IMR-90 (cell line): ENCODE measurements at regions of chr5 and their contacts with region 1.

Region 1: DNA sequence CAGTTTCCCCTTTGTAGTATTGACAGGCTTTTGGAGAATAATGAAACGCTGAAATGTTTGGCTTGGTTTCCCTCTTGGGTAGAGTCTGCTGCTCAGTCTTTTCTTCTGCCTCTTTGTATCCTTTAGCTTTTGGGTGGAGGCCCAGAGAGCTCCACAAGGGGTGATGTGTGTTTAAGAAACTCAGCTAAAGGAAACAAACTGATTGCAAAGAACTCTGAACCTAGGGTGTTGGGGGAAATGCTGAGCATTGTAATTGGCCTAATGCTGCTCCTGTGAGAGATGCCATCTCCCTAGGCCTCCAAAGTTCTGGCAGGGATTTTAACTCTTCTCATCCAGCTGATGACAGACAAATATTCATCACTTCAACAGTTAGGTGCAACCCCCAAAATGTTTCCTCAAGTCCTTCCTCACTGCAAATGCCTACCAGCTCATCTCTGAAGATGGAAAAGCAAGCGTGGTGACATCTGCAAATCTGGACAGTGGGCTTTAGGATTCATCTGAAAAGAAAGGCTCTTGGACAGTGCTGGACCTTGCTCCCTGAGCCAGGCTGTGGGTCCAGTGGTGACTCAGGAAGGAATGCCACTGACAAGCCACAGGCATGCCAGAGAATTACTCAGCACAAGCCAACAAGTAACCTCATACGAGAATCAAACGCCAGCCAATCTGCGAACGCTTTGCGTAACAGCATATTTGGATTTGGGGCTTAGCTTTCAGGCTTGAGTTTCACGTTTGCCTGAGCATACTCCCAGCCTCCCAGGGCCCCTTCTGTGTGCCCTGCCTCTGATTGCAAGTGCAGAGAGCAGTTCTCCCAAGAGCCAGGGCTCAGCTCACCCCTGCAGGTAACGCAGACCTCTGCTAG is 30.5 kb upstream of the ZSWIM6 start:
- DNase-seq: peak; percentile 100
- ATAC-seq: peak; percentile 88
- H3K4me3 ChIP-seq: no peak overlapping the region; the same call in 1 of the 2 replicates
- H3K27ac ChIP-seq: peak overlapping the region; percentile 93
- H3K4me1 ChIP-seq: peaks cover 37% of the 10 kb centered on the region
- H3K27me3 ChIP-seq: no peaks in the 10 kb centered on the region
- CTCF ChIP-seq: peak; percentile 21; the same call in 1 of the 2 replicates
- POLR2A ChIP-seq: peak; percentile 86
- RAD21 ChIP-seq: peak; percentile 32

Region 2: GRCh38 chr5:61115968-61116367 is 185.6 kb before region 1 on chr5:
- CTCF ChIA-PET with region 1: no interaction called
- POLR2A ChIA-PET with region 1: no interaction called
- dilution Hi-C with region 1: no loop called
- in situ Hi-C with region 1: no loop called
- intact Hi-C with region 1: no loop called
- DNase-seq: no peak
- ATAC-seq: no peak
- H3K4me3 ChIP-seq: no peak overlapping the region
- H3K27ac ChIP-seq: no peak overlapping the region
- H3K4me1 ChIP-seq: no peaks in the 10 kb centered on the region
- H3K27me3 ChIP-seq: no peaks in the 10 kb centered on the region
- CTCF ChIP-seq: no peak
- POLR2A ChIP-seq: no peak
- RAD21 ChIP-seq: no peak

Region 3: DNA sequence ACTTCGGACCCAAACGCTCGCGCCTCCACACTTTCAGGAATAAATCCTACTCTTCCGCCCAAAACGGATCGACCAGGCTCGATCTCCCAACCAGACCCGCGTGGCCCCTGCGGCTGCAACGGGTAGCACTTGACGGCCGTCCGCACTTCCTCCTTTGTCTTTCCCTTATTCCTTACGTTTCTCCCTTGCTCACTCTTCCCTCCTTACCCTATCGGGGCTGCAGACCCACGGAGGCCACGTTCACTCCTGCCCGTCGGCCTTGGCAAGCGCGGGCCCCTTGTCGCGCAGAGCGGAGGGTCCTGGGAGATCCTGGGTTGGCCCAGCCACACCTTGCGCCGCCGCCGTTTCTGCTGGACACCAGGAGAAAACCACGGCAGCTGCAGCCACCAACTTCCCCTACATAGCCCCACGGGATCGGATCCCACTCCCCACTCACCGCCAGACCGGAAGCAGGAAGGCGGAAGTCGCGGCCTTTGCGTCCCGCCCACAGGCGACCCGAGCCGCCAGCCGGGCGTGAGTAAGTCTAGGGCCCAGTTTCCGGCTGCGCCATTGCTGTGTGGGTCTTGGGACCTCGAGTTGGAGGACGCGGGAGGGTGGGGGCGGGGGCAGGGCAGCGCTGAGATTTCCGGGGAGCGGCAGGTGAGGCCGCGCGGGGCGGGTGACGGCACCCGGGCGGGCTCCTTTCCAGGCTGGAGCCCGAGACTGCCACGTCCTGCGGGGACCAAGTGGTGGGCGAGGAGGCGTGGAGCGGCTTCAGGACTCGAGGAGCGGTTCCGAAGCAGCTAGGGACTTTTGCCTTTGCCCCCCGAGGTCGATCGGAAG is 139.3 kb before region 1 on chr5 and contains the start of gene SMIM15:
- CTCF ChIA-PET with region 1: no interaction called
- POLR2A ChIA-PET with region 1: interaction called, 4 read pairs
- dilution Hi-C with region 1: no loop called
- in situ Hi-C with region 1: no loop called
- intact Hi-C with region 1: loop called (anchors 2 kb)
- DNase-seq: peak; percentile 87
- ATAC-seq: peak; percentile 95
- H3K4me3 ChIP-seq: peak within 1 kb of the TSS; percentile 94
- H3K27ac ChIP-seq: peak within 1 kb of the TSS; percentile 95
- H3K4me1 ChIP-seq: peaks cover 5% of the 10 kb centered on the region
- H3K27me3 ChIP-seq: no peaks in the 10 kb centered on the region
- CTCF ChIP-seq: no peak
- POLR2A ChIP-seq: peak; percentile 70
- RAD21 ChIP-seq: 0 out of 2 replicates have a peak, but pooled peaks have one; percentile 3
- total RNA-seq, gene SMIM15: 94.3 and 101 TPM in 2 replicates

Region 4: DNA sequence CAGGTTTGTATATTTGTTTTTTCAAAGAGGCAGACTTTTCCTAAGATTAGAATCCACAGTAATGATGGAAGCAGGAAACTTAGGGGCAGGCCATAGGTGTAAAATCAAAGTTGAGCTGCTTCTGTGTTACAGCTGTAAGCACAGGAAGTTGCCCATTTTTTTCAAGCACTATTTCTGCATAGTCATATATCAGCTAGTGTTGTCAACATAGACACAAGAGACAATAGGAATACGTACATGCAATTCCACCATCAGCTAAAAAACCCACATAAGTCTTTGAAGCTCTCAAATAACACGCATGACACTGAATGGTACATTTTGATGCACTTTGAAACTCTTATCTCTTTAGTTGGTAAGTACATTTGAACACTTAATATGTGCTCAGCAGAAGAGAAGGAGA is 119.1 kb before region 1 on chr5:
- CTCF ChIA-PET with region 1: no interaction called
- POLR2A ChIA-PET with region 1: no interaction called
- dilution Hi-C with region 1: no loop called
- in situ Hi-C with region 1: no loop called
- intact Hi-C with region 1: loop called (anchors 5 kb)
- DNase-seq: peak; percentile 4
- ATAC-seq: no peak
- H3K4me3 ChIP-seq: no peak overlapping the region
- H3K27ac ChIP-seq: no peak overlapping the region
- H3K4me1 ChIP-seq: peaks cover 8% of the 10 kb centered on the region
- H3K27me3 ChIP-seq: no peaks in the 10 kb centered on the region
- CTCF ChIP-seq: no peak
- POLR2A ChIP-seq: no peak
- RAD21 ChIP-seq: no peak

Region 5: GRCh38 chr5:61313960-61314681 is 12.6 kb after region 1 on chr5:
- CTCF ChIA-PET with region 1: interaction called, 8 read pairs
- POLR2A ChIA-PET with region 1: interaction called, 11 read pairs
- dilution Hi-C with region 1: no loop called
- in situ Hi-C with region 1: no loop called
- intact Hi-C with region 1: no loop called
- DNase-seq: peak; percentile 94
- ATAC-seq: peak; percentile 83
- H3K4me3 ChIP-seq: no peak overlapping the region
- H3K27ac ChIP-seq: peak overlapping the region; percentile 44; the same call in 1 of the 2 replicates
- H3K4me1 ChIP-seq: peaks cover 19% of the 10 kb centered on the region
- H3K27me3 ChIP-seq: no peaks in the 10 kb centered on the region
- CTCF ChIP-seq: no peak
- POLR2A ChIP-seq: no peak
- RAD21 ChIP-seq: no peak